ENCODE measurements at regions of chr10 and their contacts with region 1.

Region 1: GRCh38 chr10:7121154-7121810 is 289.6 kb downstream of the SFMBT2 start:
- DNase-seq: peak; percentile 83
- ATAC-seq: peak; percentile 91
- H3K4me3 Mint-ChIP-seq: no peak overlapping the region
- H3K27ac Mint-ChIP-seq: no peak overlapping the region
- H3K4me1 Mint-ChIP-seq: peaks cover 5% of the 10 kb centered on the region
- H3K27me3 Mint-ChIP-seq: peaks cover 40% of the 10 kb centered on the region

Region 2: DNA sequence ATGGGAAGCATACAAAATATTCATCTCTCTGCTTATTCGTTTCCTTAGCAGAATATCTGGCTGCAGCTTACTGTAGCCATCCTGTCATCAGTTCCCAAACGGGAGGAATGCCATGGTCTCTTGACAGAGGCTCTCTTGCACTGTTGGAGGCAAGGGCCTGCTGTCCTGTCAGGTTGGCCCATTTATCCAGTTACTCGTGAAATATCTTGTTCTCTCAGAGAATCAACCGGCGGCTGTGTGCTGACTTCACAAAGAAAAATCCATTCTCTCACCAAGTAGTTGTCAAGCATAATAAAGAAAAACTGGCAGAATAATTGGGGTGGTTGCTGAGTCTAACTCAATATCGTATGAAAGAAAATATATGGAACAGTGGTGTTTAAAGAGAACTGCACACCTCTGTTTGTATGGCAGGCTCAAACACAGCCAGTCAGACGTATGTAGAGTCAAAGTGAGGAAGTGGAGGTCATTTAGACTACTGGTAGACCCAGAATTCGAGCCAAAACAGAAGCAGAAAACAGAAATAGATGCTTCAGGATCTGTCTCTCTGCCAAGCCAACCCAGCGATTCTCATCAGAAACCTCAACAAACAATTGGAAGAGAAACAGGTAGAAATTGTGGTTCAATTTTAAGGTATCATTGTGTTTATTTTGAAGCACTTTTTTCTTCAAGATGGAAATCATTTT is 192.0 kb before region 1 on chr10:
- CTCF ChIA-PET with region 1: interaction called, 21 read pairs
- POLR2A ChIA-PET with region 1: no interaction called
- DNase-seq: no peak
- ATAC-seq: no peak
- H3K4me3 Mint-ChIP-seq: no peak overlapping the region
- H3K27ac Mint-ChIP-seq: peak overlapping the region; percentile 96
- H3K4me1 Mint-ChIP-seq: peaks cover 57% of the 10 kb centered on the region
- H3K27me3 Mint-ChIP-seq: peaks cover 2% of the 10 kb centered on the region

Region 3: GRCh38 chr10:7136016-7136415 is 14.7 kb after region 1 on chr10:
- CTCF ChIA-PET with region 1: interaction called, 20 read pairs
- POLR2A ChIA-PET with region 1: no interaction called
- DNase-seq: no peak
- ATAC-seq: no peak
- H3K4me3 Mint-ChIP-seq: no peak overlapping the region
- H3K27ac Mint-ChIP-seq: no peak overlapping the region
- H3K4me1 Mint-ChIP-seq: peaks cover 12% of the 10 kb centered on the region
- H3K27me3 Mint-ChIP-seq: peaks cover 22% of the 10 kb centered on the region

Region 4: DNA sequence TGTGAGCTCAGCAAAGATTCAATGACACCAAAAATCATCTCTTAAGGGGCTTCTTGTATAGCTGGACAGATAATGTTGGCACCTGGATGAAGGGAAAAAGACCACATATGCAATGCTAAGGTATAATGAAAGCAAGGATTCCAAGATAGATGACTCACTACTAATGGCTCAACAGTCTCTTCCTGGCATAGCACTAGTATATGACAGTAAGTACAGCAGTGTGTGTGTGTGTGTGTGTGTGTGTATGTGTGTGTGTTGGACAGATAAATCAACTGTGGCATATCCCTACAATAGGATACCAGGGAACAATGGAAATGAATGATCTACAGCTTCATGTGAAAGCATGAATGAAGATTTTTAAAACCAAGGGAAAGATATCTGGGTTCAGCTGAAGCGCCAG is 32.5 kb after region 1 on chr10:
- CTCF ChIA-PET with region 1: interaction called, 14 read pairs
- POLR2A ChIA-PET with region 1: no interaction called
- DNase-seq: no peak
- ATAC-seq: no peak
- H3K4me3 Mint-ChIP-seq: no peak overlapping the region
- H3K27ac Mint-ChIP-seq: no peak overlapping the region
- H3K4me1 Mint-ChIP-seq: peaks cover 10% of the 10 kb centered on the region
- H3K27me3 Mint-ChIP-seq: peaks cover 9% of the 10 kb centered on the region

Measured in activated CD8-positive, alpha-beta T cell treated with anti-CD3 and anti-CD28 coated beads, Interleukin-2, amount 10 ng/mL, durations not matched to agents 7 days and 5 days (primary cell).